ENCODE measurements at regions of chr1 and their contacts with region 1.

Region 1: DNA sequence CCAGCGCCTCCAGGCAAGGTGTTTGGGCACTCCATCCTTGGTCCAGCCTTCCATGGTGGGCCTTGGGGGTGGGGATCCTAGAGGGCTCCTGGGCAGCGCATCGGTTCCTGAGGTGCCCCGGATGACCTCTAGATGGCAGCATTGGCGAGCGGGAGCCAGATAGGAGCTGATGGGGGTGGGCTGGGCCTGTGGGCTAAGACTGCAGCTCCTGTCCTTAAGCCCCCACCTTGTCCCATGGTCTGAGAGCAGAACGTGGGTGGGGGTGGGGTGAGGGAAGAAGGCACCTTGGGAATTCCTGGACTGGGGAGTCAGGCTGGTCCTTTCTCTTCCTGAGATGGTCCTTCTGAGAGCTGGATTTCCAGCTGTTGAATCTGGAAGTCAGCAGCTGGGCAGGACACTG is 93.4 kb upstream of the CSF3R start:
- DNase-seq: peak; percentile 51 to 78
- H3K4me3 ChIP-seq: no peak overlapping the region
- H3K27ac ChIP-seq: no peak overlapping the region
- H3K4me1 ChIP-seq: no peaks in the 10 kb centered on the region
- H3K27me3 ChIP-seq: peaks cover 0 to 94% (median 29%) of the 10 kb centered on the region in 3 donors
- CTCF ChIP-seq: peak in 4 of 7 experiments; percentile 41 to 61 (median 59)
- EP300 ChIP-seq: no peak
- POLR2A ChIP-seq: no peak

Region 2: GRCh38 chr1:37434292-37434907 is 858.3 kb after region 1 on chr1:
- intact Hi-C with region 1: loop called (anchors 10 kb)
- DNase-seq: peak; percentile 70 to 83
- H3K4me3 ChIP-seq: no peak overlapping the region
- H3K27ac ChIP-seq: no peak overlapping the region
- H3K4me1 ChIP-seq: no peaks in the 10 kb centered on the region
- H3K27me3 ChIP-seq: peaks cover 7 to 82% (median 13%) of the 10 kb centered on the region in 3 donors
- CTCF ChIP-seq: peak in 5 of 7 experiments; percentile 67 to 85 (median 79)
- EP300 ChIP-seq: no peak
- POLR2A ChIP-seq: no peak